ENCODE measurements at regions of chr22 and their contacts with region 1.

Region 1: DNA sequence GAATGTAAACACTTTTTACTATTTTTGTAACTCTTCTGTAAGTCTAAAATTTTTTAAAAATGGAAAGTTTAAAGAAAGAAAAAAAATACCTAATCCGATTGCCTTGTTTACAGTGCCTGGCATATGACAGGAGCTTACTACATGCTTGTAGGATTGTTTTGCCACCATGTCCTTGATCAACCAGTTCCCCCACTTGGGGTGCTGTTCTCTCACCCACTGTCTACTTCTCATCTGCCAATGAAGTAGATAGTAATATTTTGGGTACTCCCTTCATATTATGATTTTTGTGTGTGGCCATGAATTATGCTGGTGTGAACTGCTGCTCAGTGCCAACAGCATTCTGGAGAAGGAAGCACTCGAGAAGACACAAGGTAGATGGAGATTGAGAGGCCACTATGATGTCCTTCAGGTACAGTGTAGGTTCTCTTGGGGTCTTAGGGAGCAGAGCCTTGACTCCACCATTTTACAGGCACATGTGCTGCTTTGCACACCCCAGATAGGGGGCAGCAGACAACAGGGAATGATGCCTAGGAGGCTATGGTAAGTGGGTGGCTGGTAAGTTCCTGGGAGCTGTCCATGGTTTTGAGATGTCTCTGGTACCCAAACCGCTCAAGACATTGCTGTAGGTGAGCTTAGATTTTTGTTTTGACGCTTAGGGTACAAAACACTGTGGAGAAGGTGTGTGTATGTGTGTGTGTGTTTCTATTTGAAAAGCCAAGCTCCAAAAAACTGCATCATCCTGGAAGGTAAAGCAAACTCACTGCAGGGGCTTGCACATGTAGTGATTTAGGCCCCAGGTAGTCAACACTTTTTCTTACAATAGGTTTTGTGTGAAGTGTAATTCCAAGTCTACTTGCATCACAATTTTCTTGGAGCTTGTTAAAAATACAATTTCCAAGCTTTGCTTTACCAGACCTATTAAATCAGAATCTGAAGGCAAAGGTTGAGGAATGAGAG is 494.5 kb upstream of the LARGE1 start:
- DNase-seq: peak; percentile 80
- ATAC-seq: peak; percentile 99
- H3K4me3 Mint-ChIP-seq: no peak overlapping the region
- H3K27ac Mint-ChIP-seq: no peak overlapping the region
- H3K4me1 Mint-ChIP-seq: peaks cover 9% of the 10 kb centered on the region
- H3K27me3 Mint-ChIP-seq: no peaks in the 10 kb centered on the region
- CTCF ChIP-seq: peak; percentile 83

Region 2: GRCh38 chr22:34380532-34380931 is 34.2 kb before region 1 on chr22:
- CTCF ChIA-PET with region 1: interaction called, 10 read pairs
- POLR2A ChIA-PET with region 1: no interaction called
- DNase-seq: no peak
- ATAC-seq: no peak
- H3K4me3 Mint-ChIP-seq: no peak overlapping the region
- H3K27ac Mint-ChIP-seq: no peak overlapping the region
- H3K4me1 Mint-ChIP-seq: no peaks in the 10 kb centered on the region
- H3K27me3 Mint-ChIP-seq: peaks cover 3% of the 10 kb centered on the region; the same call in 1 of the 2 replicates
- CTCF ChIP-seq: no peak

Region 3: DNA sequence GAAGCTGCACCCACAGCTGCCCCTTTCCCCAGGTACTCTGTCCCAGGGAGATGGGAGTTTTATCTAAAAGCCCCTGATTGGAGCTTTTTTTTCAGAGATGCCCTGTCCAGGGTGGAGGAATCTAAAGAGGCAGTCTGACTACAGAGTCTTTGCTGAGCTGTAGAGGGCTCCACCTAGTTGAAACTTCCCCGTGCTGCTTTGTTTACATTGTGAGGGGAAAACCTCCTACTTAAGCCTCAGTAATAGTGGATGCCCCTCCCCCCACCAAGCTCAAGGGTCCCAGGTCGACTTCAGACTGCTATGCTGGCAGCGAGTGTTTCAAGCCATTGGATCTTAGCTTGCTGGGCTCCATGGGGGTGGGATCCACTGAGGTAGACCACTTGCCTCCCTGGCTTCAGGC is 24.4 kb before region 1 on chr22:
- CTCF ChIA-PET with region 1: interaction called, 10 read pairs
- POLR2A ChIA-PET with region 1: no interaction called
- DNase-seq: peak; percentile 14
- ATAC-seq: peak; percentile 71
- H3K4me3 Mint-ChIP-seq: no peak overlapping the region
- H3K27ac Mint-ChIP-seq: no peak overlapping the region
- H3K4me1 Mint-ChIP-seq: no peaks in the 10 kb centered on the region
- H3K27me3 Mint-ChIP-seq: peaks cover 14% of the 10 kb centered on the region
- CTCF ChIP-seq: no peak

Region 4: DNA sequence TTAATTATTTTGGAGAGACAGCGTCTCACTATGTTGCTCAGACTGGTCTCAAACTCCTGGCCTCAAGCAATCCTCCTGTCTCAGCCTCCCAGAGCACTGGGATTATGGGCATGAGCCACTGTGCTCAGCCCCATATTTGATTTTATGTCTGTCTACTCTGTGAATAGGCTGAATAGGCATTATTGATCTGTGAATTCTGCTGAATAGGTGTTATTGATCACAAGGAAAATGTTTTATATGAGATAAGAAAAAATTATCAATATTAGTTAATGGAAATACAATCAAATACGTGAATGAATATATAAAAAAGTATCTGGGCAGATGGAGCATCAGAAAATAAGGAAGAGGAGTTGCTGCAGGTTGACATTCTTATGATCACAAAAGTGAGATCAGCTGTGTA is 11.1 kb before region 1 on chr22:
- CTCF ChIA-PET with region 1: interaction called, 10 read pairs
- POLR2A ChIA-PET with region 1: no interaction called
- DNase-seq: no peak
- ATAC-seq: no peak
- H3K4me3 Mint-ChIP-seq: no peak overlapping the region
- H3K27ac Mint-ChIP-seq: no peak overlapping the region
- H3K4me1 Mint-ChIP-seq: no peaks in the 10 kb centered on the region
- H3K27me3 Mint-ChIP-seq: no peaks in the 10 kb centered on the region
- CTCF ChIP-seq: no peak

Region 5: GRCh38 chr22:35023692-35024363 is 609.1 kb after region 1 on chr22:
- CTCF ChIA-PET with region 1: interaction called, 34 read pairs
- POLR2A ChIA-PET with region 1: interaction called, 3 read pairs
- DNase-seq: peak; percentile 95
- ATAC-seq: peak; percentile 91
- H3K4me3 Mint-ChIP-seq: peak overlapping the region; percentile 69
- H3K27ac Mint-ChIP-seq: no peak overlapping the region; the same call in 1 of the 2 replicates
- H3K4me1 Mint-ChIP-seq: peaks cover 12% of the 10 kb centered on the region
- H3K27me3 Mint-ChIP-seq: peaks cover 15% of the 10 kb centered on the region
- CTCF ChIP-seq: peak; percentile 98

Region 6: DNA sequence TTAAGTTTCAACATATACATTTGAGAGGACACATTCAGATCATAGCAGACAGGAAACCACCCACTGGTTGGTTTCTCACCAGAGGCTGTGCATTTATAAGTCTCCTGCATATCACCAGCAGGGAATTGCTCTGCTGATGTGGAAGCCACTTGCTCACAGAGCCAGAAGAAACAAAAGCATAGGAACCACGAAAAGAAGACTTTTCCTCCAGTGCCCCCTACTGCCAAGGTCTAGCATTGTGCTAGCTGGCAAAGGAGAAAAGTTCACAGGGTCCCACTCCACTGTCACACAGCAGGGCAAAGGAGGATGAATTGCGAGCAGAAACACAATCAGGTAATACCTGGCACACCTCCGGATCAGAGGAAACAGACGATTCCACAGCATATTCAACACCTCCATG is 622.3 kb after region 1 on chr22:
- CTCF ChIA-PET with region 1: interaction called, 15 read pairs
- POLR2A ChIA-PET with region 1: no interaction called
- DNase-seq: peak; percentile 50
- ATAC-seq: peak; percentile 85
- H3K4me3 Mint-ChIP-seq: no peak overlapping the region
- H3K27ac Mint-ChIP-seq: no peak overlapping the region
- H3K4me1 Mint-ChIP-seq: peaks cover 12% of the 10 kb centered on the region
- H3K27me3 Mint-ChIP-seq: peaks cover 2% of the 10 kb centered on the region; the same call in 1 of the 2 replicates
- CTCF ChIP-seq: peak; percentile 35; the same call in 1 of the 2 replicates

Region 7: DNA sequence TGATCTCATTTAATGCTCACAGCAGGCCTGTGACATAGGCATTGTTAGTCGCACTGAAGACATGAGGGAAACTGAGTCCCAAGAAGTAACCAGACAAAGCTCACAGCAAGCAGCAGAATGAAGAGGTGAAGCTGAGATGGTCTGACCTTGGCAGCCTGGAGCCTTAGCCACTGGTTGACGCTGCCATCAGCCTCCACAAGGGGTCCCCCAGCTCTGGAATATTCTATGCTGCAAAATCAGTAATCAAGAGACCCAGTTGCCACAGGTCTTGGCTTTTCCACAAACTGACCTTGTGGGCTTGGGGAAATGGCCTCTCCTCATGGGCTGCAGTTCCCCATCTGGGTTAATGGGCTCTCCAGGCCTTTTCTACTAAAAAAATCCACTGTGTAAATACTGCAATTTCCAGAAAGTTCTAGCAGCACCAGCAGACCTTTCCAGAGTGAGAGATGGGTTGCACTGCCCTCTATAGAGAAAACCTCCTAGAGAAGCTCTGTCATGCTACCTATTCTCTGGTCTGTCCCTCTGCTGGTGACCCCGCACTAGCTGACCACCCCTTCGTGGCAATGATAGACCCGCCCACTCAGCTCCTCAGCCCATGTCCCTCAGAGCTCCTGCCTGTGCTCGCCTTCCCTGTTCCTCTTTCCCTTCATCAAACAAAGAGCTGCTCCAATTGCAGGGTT is 628.6 kb after region 1 on chr22:
- CTCF ChIA-PET with region 1: interaction called, 15 read pairs
- POLR2A ChIA-PET with region 1: no interaction called
- DNase-seq: peak; percentile 44
- ATAC-seq: peak; percentile 79
- H3K4me3 Mint-ChIP-seq: no peak overlapping the region
- H3K27ac Mint-ChIP-seq: no peak overlapping the region
- H3K4me1 Mint-ChIP-seq: peaks cover 14% of the 10 kb centered on the region
- H3K27me3 Mint-ChIP-seq: peaks cover 2% of the 10 kb centered on the region; the same call in 1 of the 2 replicates
- CTCF ChIP-seq: no peak